ENCODE measurements at regions of chr2 and their contacts with region 1.

Region 1: DNA sequence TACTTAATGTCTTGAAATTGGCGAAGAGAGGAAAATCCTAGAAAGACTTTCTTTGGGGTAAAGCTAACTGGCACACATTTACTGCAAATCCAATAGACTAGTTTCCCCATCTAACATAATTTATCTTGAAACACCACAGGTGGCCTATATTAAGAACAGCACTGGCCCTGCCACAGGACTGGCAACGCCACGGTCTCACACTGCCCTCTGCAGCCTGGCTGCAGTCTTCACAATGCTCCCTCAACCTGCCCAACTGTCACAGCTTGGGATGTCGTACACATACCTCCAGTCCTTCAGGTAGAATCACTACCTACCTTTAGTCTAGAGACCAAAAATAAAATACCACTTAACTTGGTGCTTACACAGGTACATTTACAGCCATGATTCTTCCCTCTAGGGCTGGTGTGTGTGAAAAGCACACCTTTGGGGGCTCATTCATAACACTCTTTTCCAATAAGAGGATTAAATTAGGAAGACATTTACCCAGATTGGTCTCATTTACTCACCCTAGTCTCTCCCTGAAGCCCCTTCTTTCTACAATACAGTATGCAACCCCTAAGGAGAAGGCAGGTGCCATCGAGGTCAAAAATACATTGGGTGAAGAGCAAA is 222.2 kb downstream of the C1D start:
- DNase-seq: peak; percentile 82
- H3K4me3 ChIP-seq: no peak overlapping the region
- H3K27ac ChIP-seq: no peak overlapping the region
- H3K4me1 ChIP-seq: no peaks in the 10 kb centered on the region
- H3K27me3 ChIP-seq: no peaks in the 10 kb centered on the region

Region 2: GRCh38 chr2:66587216-66587615 is 1253.3 kb before region 1 on chr2:
- in situ Hi-C with region 1: loop called (anchors 10 kb)
- DNase-seq: peak; percentile 26
- H3K4me3 ChIP-seq: no peak overlapping the region
- H3K27ac ChIP-seq: no peak overlapping the region
- H3K4me1 ChIP-seq: no peaks in the 10 kb centered on the region
- H3K27me3 ChIP-seq: no peaks in the 10 kb centered on the region

Region 3: DNA sequence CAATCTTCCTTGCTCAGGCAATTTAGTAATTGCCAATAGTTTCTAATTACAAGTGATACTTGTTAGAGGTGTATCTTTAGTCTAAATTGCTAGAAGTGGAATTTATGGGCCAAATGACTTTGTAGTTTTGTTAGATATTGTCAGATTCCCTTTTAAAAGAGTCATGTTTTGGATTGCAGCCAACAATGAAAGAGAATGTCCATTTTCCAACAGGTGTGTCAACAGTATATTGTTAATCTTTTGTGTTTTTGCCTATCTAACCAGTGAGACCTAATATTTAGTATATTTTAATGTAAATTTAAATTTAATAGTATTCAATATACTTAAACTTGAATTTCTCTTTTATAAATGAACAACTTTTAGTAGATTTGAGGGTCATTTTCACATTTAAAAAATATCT is 702.9 kb before region 1 on chr2:
- in situ Hi-C with region 1: no loop called
- DNase-seq: no peak
- H3K4me3 ChIP-seq: no peak overlapping the region
- H3K27ac ChIP-seq: no peak overlapping the region
- H3K4me1 ChIP-seq: no peaks in the 10 kb centered on the region
- H3K27me3 ChIP-seq: no peaks in the 10 kb centered on the region

Region 4: GRCh38 chr2:67234439-67234838 is 606.1 kb before region 1 on chr2:
- in situ Hi-C with region 1: loop called (anchors 25 kb)
- DNase-seq: peak; percentile 71
- H3K4me3 ChIP-seq: no peak overlapping the region
- H3K27ac ChIP-seq: no peak overlapping the region
- H3K4me1 ChIP-seq: no peaks in the 10 kb centered on the region
- H3K27me3 ChIP-seq: no peaks in the 10 kb centered on the region

Measured in GM23248 (cell line).